ENCODE measurements at regions of chr14 and their contacts with region 1.

Region 1: DNA sequence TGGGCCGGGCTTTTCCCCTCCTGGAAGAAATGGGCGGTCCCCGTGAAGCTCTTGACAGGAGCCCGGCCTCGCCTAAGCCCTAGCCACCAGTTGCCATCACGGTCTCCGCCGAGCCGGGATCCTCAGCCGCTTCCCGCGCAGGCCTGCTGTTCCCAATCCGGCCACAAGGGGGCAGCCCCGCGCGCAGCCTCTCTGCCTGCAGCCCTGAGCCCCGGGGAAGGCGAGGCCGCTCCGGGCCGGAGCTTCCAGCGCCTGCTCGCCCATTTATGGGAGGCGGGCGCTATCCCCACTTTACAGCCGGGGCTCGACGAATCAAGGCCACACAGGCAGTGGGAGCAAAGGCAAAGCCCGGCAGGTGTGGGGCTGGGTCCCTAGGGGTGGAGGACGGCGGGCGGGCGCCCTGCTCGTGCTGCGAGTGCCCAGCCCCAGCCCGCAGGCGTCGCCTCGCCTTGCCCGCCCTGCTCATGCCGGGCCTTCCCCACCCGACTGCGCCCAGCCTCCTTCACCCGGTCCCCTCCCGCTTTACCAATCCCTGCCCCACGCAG is 61.5 kb downstream of the LGMN start:
- DNase-seq: peak in 3 of 5 donors; percentile 46 to 61 (median 61)
- H3K4me3 ChIP-seq: no peak overlapping the region
- H3K4me3 Mint-ChIP-seq: no peak overlapping the region
- H3K27ac ChIP-seq: no peak overlapping the region
- H3K27ac Mint-ChIP-seq: peak overlapping the region in 1 of 7 donors; percentile 25
- H3K4me1 ChIP-seq: peaks cover under 1% of the 10 kb centered on the region
- H3K4me1 Mint-ChIP-seq: peaks cover 0 to 4% (median 0%) of the 10 kb centered on the region in 4 donors
- H3K27me3 ChIP-seq: no peaks in the 10 kb centered on the region
- H3K27me3 Mint-ChIP-seq: no peaks in the 10 kb centered on the region

Region 2: GRCh38 chr14:92135267-92135666 is 551.7 kb before region 1 on chr14:
- CTCF ChIA-PET with region 1: no interaction called
- POLR2A ChIA-PET with region 1: no interaction called
- intact Hi-C with region 1: loop called (anchors 10 kb)
- DNase-seq: peak in 2 of 5 donors; percentile 10 to 13
- H3K4me3 ChIP-seq: no peak overlapping the region
- H3K4me3 Mint-ChIP-seq: no peak overlapping the region
- H3K27ac ChIP-seq: no peak overlapping the region
- H3K27ac Mint-ChIP-seq: no peak overlapping the region
- H3K4me1 ChIP-seq: no peaks in the 10 kb centered on the region
- H3K4me1 Mint-ChIP-seq: peaks cover under 1 to 2% (median 1%) of the 10 kb centered on the region in 4 donors
- H3K27me3 ChIP-seq: no peaks in the 10 kb centered on the region
- H3K27me3 Mint-ChIP-seq: no peaks in the 10 kb centered on the region

Region 3: GRCh38 chr14:92675421-92675820 is 11.6 kb before region 1 on chr14:
- CTCF ChIA-PET with region 1: interaction called, 13 read pairs
- POLR2A ChIA-PET with region 1: interaction called, 5 read pairs
- intact Hi-C with region 1: no loop called
- DNase-seq: no peak
- H3K4me3 ChIP-seq: no peak overlapping the region
- H3K4me3 Mint-ChIP-seq: no peak overlapping the region
- H3K27ac ChIP-seq: no peak overlapping the region
- H3K27ac Mint-ChIP-seq: peak overlapping the region in 6 of 7 donors; percentile 23 to 95 (median 56)
- H3K4me1 ChIP-seq: peaks cover 39% of the 10 kb centered on the region
- H3K4me1 Mint-ChIP-seq: peaks cover 20 to 65% (median 40%) of the 10 kb centered on the region in 4 donors
- H3K27me3 ChIP-seq: no peaks in the 10 kb centered on the region
- H3K27me3 Mint-ChIP-seq: no peaks in the 10 kb centered on the region

Region 4: GRCh38 chr14:92759300-92759678 is 72.3 kb after region 1 on chr14:
- CTCF ChIA-PET with region 1: no interaction called
- POLR2A ChIA-PET with region 1: no interaction called
- intact Hi-C with region 1: no loop called
- DNase-seq: no peak
- H3K4me3 ChIP-seq: no peak overlapping the region
- H3K4me3 Mint-ChIP-seq: no peak overlapping the region
- H3K27ac ChIP-seq: no peak overlapping the region
- H3K27ac Mint-ChIP-seq: no peak overlapping the region
- H3K4me1 ChIP-seq: no peaks in the 10 kb centered on the region
- H3K4me1 Mint-ChIP-seq: peaks cover 5 to 10% (median 9%) of the 10 kb centered on the region in 4 donors
- H3K27me3 ChIP-seq: no peaks in the 10 kb centered on the region
- H3K27me3 Mint-ChIP-seq: peaks cover 3% of the 10 kb centered on the region in 2 donors